ENCODE measurements at regions of chr6 and their contacts with region 1.

Region 1: DNA sequence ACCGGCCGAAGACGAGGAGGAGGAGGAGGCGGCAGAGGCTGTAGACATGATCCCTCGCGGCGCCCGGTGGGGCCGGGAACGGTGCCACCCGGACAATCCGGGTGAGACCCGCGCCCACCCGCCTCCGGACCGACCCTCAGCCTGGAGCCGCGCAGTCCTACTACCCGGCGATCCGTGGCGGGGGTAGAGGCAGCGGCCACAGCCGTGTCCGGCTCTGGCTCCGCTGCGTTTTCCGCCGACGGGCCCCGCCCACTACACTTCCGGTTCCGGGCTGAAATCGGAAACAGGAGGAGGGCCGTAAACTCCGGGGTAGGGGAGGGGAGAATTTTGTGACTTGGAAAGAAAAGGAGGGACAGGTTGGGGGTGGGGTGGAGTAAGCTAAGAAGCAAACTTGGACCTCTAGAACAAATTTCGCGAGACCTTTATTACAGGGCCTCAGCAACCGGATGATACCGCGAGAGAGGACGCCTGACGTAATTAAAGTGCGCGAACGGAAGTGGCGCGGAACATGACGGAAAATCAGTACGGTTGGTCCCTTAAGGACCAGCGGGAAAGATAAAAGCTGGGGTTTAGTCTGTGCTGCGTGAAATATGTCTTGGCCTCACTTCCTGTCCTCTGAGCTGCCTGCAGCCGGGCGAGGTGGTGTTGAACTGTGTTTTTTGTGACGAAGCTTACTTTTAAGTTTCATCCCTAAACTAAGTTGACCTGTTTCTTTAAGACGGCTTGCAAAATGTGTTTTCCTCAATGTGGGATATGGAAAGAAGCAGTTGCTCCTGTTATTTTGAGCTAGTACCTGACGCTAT is at the start of gene MAP3K7:
- DNase-seq: peak; percentile 98
- H3K4me3 Mint-ChIP-seq: peak within 1 kb of the TSS; percentile 99
- H3K27ac Mint-ChIP-seq: peak within 1 kb of the TSS; percentile 99
- H3K4me1 Mint-ChIP-seq: peaks cover 40% of the 10 kb centered on the region
- H3K27me3 Mint-ChIP-seq: no peaks in the 10 kb centered on the region
- total RNA-seq, gene MAP3K7: 23.2 to 23.6 TPM

Region 2: GRCh38 chr6:88963139-88964090 is 1623.6 kb before region 1 on chr6 and contains the start of gene RNGTT:
- CTCF ChIA-PET with region 1: no interaction called
- intact Hi-C with region 1: loop called (anchors 1 kb)
- DNase-seq: peak; percentile 99
- H3K4me3 Mint-ChIP-seq: peak within 1 kb of the TSS; percentile 99
- H3K27ac Mint-ChIP-seq: peak within 1 kb of the TSS; percentile 87
- H3K4me1 Mint-ChIP-seq: peaks cover 34% of the 10 kb centered on the region
- H3K27me3 Mint-ChIP-seq: no peaks in the 10 kb centered on the region
- total RNA-seq, gene RNGTT: 21.7 to 23.5 TPM

Region 3: GRCh38 chr6:89352278-89353117 is 1234.5 kb before region 1 on chr6 and contains the start of gene UBE2J1:
- CTCF ChIA-PET with region 1: no interaction called
- intact Hi-C with region 1: loop called (anchors 2 kb)
- DNase-seq: peak; percentile 71
- H3K4me3 Mint-ChIP-seq: peak within 1 kb of the TSS; percentile 90
- H3K27ac Mint-ChIP-seq: peak within 1 kb of the TSS; percentile 84
- H3K4me1 Mint-ChIP-seq: peaks cover 66% of the 10 kb centered on the region
- H3K27me3 Mint-ChIP-seq: no peaks in the 10 kb centered on the region
- total RNA-seq, gene UBE2J1: 10.8 to 10.9 TPM

Region 4: GRCh38 chr6:89638320-89639195 is 948.5 kb before region 1 on chr6 and contains the start of gene LYRM2:
- CTCF ChIA-PET with region 1: no interaction called
- intact Hi-C with region 1: loop called (anchors 1 kb)
- DNase-seq: peak; percentile 95
- H3K4me3 Mint-ChIP-seq: peak within 1 kb of the TSS; percentile 83
- H3K27ac Mint-ChIP-seq: peak within 1 kb of the TSS; percentile 96
- H3K4me1 Mint-ChIP-seq: peaks cover 28% of the 10 kb centered on the region
- H3K27me3 Mint-ChIP-seq: no peaks in the 10 kb centered on the region
- total RNA-seq, gene LYRM2: 15.8 to 18.3 TPM

Region 5: DNA sequence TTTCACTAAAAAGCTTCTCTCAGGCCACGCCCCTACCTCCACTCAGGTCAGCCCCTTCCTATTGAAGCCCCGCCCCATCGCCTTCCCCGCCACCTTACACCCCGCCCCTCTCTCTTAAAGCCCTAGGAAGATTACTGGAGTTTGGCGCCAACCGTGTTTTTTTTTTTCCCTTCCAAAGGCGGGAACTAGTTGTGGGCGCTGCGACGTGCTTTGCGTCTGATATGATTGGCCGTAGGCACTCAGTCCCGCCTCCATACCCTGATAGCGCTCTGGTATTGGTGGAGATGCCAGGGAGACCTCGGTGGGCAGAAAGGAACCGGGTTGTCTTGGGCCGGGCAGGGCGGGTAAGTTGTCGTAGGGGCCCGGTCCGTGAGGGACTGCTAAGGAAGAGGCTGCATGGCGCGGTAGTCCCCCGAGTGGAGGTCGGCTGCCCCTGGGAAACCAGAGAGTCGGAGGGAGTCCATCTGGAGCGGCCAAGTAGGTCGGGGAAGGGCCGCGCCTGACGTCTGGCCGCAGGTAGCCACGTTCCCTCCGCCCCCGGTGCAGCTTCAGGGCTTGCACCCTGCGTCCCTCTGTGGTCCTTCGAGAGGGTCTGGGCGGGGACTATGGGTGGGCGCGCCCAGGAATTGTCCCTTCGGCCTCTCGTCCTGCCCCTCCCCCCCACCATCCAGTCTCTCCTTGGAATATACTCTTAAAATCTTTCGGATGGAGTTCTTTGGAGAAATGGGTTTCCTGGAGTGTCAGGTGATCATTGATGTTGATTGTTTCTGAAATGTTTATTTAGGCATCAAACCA is 757.2 kb before region 1 on chr6 and contains the start of gene CASP8AP2:
- CTCF ChIA-PET with region 1: no interaction called
- intact Hi-C with region 1: loop called (anchors 1 kb)
- DNase-seq: peak; percentile 98
- H3K4me3 Mint-ChIP-seq: peak within 1 kb of the TSS; percentile 99
- H3K27ac Mint-ChIP-seq: peak within 1 kb of the TSS; percentile 96
- H3K4me1 Mint-ChIP-seq: peaks cover 33% of the 10 kb centered on the region
- H3K27me3 Mint-ChIP-seq: no peaks in the 10 kb centered on the region
- total RNA-seq, gene CASP8AP2: 27.4 to 30.2 TPM

Region 6: GRCh38 chr6:90025523-90026061 is 561.4 kb before region 1 on chr6:
- CTCF ChIA-PET with region 1: no interaction called
- intact Hi-C with region 1: loop called (anchors 5 kb)
- DNase-seq: peak; percentile 85
- H3K4me3 Mint-ChIP-seq: peak overlapping the region; percentile 47
- H3K27ac Mint-ChIP-seq: peak overlapping the region; percentile 87
- H3K4me1 Mint-ChIP-seq: peaks cover 93% of the 10 kb centered on the region
- H3K27me3 Mint-ChIP-seq: no peaks in the 10 kb centered on the region

Region 7: DNA sequence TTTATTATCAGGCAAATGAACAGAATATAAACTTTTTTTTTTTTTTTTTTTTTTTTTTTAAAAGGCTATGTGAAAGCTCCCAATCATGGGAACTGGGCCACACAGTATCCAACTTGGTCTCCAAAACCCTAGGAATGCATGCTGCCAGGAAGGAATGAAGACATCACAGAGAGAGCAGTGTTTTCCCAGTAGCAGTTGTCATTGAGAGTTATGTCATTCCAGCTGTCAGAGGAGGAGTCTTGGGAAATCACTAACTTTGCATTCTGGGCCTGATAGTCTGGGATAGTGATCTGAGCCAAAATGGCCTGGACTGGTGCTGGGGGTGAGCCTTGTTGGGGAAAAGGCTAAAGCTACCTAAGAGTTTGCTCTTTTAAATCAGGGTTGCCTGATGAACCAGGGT is 231.1 kb after region 1 on chr6:
- CTCF ChIA-PET with region 1: no interaction called
- intact Hi-C with region 1: no loop called
- DNase-seq: no peak
- H3K4me3 Mint-ChIP-seq: no peak overlapping the region
- H3K27ac Mint-ChIP-seq: no peak overlapping the region
- H3K4me1 Mint-ChIP-seq: no peaks in the 10 kb centered on the region
- H3K27me3 Mint-ChIP-seq: no peaks in the 10 kb centered on the region

Measured in activated naive CD4-positive, alpha-beta T cell treated with anti-CD3 and anti-CD28 coated beads for 36 hours (primary cell).